CD4-positive, alpha-beta memory T cell (primary cell): ENCODE measurements at regions of chr18 and their contacts with region 1.

Region 1: GRCh38 chr18:77101410-77102258 is 30.9 kb downstream of the MBP start:
- DNase-seq: peak in 2 of 5 donors; percentile 27 to 66
- H3K4me3 ChIP-seq: peak overlapping the region; percentile 31 to 39
- H3K4me3 Mint-ChIP-seq: peak overlapping the region; percentile 78 to 89 (median 83)
- H3K27ac ChIP-seq: peak overlapping the region; percentile 81
- H3K27ac Mint-ChIP-seq: peak overlapping the region; percentile 97 to 98 (median 98)
- H3K4me1 ChIP-seq: peaks cover 99% of the 10 kb centered on the region
- H3K4me1 Mint-ChIP-seq: peaks cover 79 to 99% (median 90%) of the 10 kb centered on the region in 4 donors
- H3K27me3 ChIP-seq: no peaks in the 10 kb centered on the region
- H3K27me3 Mint-ChIP-seq: no peaks in the 10 kb centered on the region

Region 2: GRCh38 chr18:77054606-77055428 is 46.8 kb before region 1 on chr18:
- CTCF ChIA-PET with region 1: interaction called, 10 read pairs
- POLR2A ChIA-PET with region 1: interaction called, 28 read pairs
- intact Hi-C with region 1: no loop called
- DNase-seq: peak; percentile 80 to 88 (median 86)
- H3K4me3 ChIP-seq: peak overlapping the region in 1 of 2 donors; percentile 54
- H3K4me3 Mint-ChIP-seq: peak overlapping the region; percentile 72 to 92 (median 86)
- H3K27ac ChIP-seq: peak overlapping the region; percentile 84
- H3K27ac Mint-ChIP-seq: peak overlapping the region; percentile 93 to 100 (median 97)
- H3K4me1 ChIP-seq: peaks cover 83% of the 10 kb centered on the region
- H3K4me1 Mint-ChIP-seq: peaks cover 56 to 79% (median 68%) of the 10 kb centered on the region in 4 donors
- H3K27me3 ChIP-seq: no peaks in the 10 kb centered on the region
- H3K27me3 Mint-ChIP-seq: no peaks in the 10 kb centered on the region

Region 3: DNA sequence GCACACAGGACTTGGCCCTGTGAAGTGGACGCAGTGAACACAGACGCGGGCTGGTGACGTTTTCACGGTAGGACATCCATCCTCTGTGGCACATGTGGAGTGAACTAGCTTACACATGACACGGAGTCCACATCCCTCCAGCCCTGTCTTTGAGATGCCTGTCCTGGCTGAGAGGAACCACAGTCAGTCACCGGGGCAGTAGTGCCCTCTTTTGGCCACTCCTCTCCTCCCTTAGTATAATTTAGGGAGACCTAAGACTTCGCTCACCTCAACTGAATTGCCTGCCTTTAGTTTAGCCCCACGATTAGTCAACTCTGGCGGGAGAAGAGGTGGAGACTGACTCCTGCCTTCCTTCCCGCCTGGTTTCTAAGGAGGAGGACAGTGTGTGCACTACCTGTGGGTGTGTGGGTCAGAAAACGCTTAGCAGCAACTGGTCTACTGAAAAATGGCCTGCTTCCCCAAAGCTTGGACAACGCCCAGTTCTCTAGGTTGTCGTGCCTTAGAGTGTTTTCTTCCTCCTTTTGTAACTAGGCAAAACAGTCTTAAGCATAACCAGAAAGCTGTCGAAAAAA is 39.6 kb before region 1 on chr18:
- CTCF ChIA-PET with region 1: interaction called, 21 read pairs
- POLR2A ChIA-PET with region 1: interaction called, 150 read pairs
- intact Hi-C with region 1: loop called (anchors 1 kb)
- DNase-seq: peak in 1 of 5 donors; percentile 62
- H3K4me3 ChIP-seq: peak overlapping the region in 1 of 2 donors; percentile 8
- H3K4me3 Mint-ChIP-seq: peak overlapping the region; percentile 61 to 92 (median 81)
- H3K27ac ChIP-seq: peak overlapping the region; percentile 77
- H3K27ac Mint-ChIP-seq: peak overlapping the region; percentile 97 to 100 (median 99)
- H3K4me1 ChIP-seq: peaks cover 95% of the 10 kb centered on the region
- H3K4me1 Mint-ChIP-seq: peaks cover 72 to 89% (median 82%) of the 10 kb centered on the region in 4 donors
- H3K27me3 ChIP-seq: no peaks in the 10 kb centered on the region
- H3K27me3 Mint-ChIP-seq: no peaks in the 10 kb centered on the region

Region 4: GRCh38 chr18:77114415-77115191 is 13.0 kb after region 1 on chr18:
- CTCF ChIA-PET with region 1: no interaction called
- POLR2A ChIA-PET with region 1: interaction called, 11 read pairs
- intact Hi-C with region 1: no loop called
- DNase-seq: no peak
- H3K4me3 ChIP-seq: no peak overlapping the region
- H3K4me3 Mint-ChIP-seq: peak overlapping the region in 7 of 8 donors; percentile 5 to 64 (median 28)
- H3K27ac ChIP-seq: peak overlapping the region; percentile 36
- H3K27ac Mint-ChIP-seq: peak overlapping the region; percentile 67 to 93 (median 86)
- H3K4me1 ChIP-seq: peaks cover 90% of the 10 kb centered on the region
- H3K4me1 Mint-ChIP-seq: peaks cover 59 to 95% (median 79%) of the 10 kb centered on the region in 4 donors
- H3K27me3 ChIP-seq: no peaks in the 10 kb centered on the region
- H3K27me3 Mint-ChIP-seq: no peaks in the 10 kb centered on the region

Region 5: GRCh38 chr18:77124452-77124922 is 22.9 kb after region 1 on chr18:
- CTCF ChIA-PET with region 1: interaction called, 19 read pairs
- POLR2A ChIA-PET with region 1: interaction called, 126 read pairs
- intact Hi-C with region 1: loop called (anchors 1 kb)
- DNase-seq: peak in 4 of 5 donors; percentile 38 to 79 (median 46)
- H3K4me3 ChIP-seq: peak overlapping the region in 1 of 2 donors; percentile 34
- H3K4me3 Mint-ChIP-seq: peak overlapping the region; percentile 71 to 88 (median 80)
- H3K27ac ChIP-seq: peak overlapping the region; percentile 66
- H3K27ac Mint-ChIP-seq: peak overlapping the region; percentile 86 to 96 (median 89)
- H3K4me1 ChIP-seq: peaks cover 99% of the 10 kb centered on the region
- H3K4me1 Mint-ChIP-seq: peaks cover 75 to 100% (median 91%) of the 10 kb centered on the region in 4 donors
- H3K27me3 ChIP-seq: no peaks in the 10 kb centered on the region
- H3K27me3 Mint-ChIP-seq: no peaks in the 10 kb centered on the region